Activated naive CD4-positive, alpha-beta T cell treated with anti-CD3 and anti-CD28 coated beads for 36 hours (primary cell): ENCODE measurements at regions of chr6 and their contacts with region 1.

Region 1: GRCh38 chr6:149190224-149190831 is 127.2 kb upstream of the TAB2 start:
- DNase-seq: peak; percentile 87
- H3K4me3 Mint-ChIP-seq: no peak overlapping the region
- H3K27ac Mint-ChIP-seq: no peak overlapping the region
- H3K4me1 Mint-ChIP-seq: peaks cover 19% of the 10 kb centered on the region
- H3K27me3 Mint-ChIP-seq: no peaks in the 10 kb centered on the region

Region 2: GRCh38 chr6:149082286-149082707 is 108.0 kb before region 1 on chr6:
- CTCF ChIA-PET with region 1: interaction called, 4 read pairs
- intact Hi-C with region 1: loop called (anchors 1 kb)
- DNase-seq: peak; percentile 97
- H3K4me3 Mint-ChIP-seq: no peak overlapping the region
- H3K27ac Mint-ChIP-seq: peak overlapping the region; percentile 41
- H3K4me1 Mint-ChIP-seq: peaks cover 54% of the 10 kb centered on the region
- H3K27me3 Mint-ChIP-seq: no peaks in the 10 kb centered on the region

Region 3: GRCh38 chr6:149200276-149200938 is 10.1 kb after region 1 on chr6:
- CTCF ChIA-PET with region 1: interaction called, 12 read pairs
- intact Hi-C with region 1: no loop called
- DNase-seq: no peak
- H3K4me3 Mint-ChIP-seq: no peak overlapping the region
- H3K27ac Mint-ChIP-seq: no peak overlapping the region
- H3K4me1 Mint-ChIP-seq: peaks cover 6% of the 10 kb centered on the region
- H3K27me3 Mint-ChIP-seq: no peaks in the 10 kb centered on the region

Region 4: GRCh38 chr6:149246691-149247384 is 56.5 kb after region 1 on chr6:
- CTCF ChIA-PET with region 1: no interaction called
- intact Hi-C with region 1: no loop called
- DNase-seq: no peak
- H3K4me3 Mint-ChIP-seq: no peak overlapping the region
- H3K27ac Mint-ChIP-seq: no peak overlapping the region
- H3K4me1 Mint-ChIP-seq: peaks cover 34% of the 10 kb centered on the region
- H3K27me3 Mint-ChIP-seq: no peaks in the 10 kb centered on the region

Region 5: DNA sequence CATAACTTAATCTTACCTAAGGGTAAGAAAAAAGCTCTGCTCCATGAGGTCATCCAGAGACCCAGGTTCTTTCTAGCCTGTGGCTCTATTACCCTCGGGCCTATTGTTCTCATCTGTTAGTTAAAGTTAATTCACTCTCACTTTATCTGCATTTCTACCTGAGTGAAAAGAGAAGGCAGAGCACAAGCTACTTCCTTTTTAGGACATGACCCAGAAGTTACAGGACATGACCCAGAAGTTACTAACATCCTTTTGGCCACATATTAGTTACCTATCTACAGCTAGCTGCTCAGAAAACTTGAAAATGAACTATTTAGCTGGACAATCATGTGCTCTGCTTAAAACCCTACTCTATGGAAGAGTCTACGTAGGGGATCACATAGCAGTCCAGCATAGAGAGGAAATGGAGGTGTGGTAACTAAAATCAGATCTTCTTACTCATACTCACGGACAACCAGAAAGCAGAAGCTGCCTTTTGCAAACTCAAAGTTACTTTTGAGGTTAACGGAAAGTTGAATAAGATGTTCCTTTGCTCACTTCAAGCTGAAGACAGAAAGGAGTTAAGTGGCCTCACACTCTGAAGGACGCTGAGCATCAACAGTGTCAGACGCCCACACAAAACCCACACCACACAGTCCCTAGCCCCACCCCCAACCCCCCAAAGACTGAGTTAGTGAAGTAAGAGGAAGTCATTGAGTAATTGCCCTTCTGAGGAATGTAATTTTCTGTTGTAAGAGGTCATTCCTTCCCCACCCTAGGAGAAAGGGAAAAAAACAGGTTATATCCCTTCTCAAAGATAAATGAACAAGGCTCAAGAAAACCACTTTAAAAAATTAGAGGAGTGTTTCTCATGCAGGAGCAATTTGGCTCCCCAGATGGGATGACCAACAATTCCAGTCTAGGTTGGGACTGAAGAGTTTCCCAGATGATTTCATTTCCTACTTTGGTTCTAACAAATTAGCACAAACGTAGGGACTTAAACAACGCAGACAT is 81.3 kb after region 1 on chr6:
- CTCF ChIA-PET with region 1: no interaction called
- intact Hi-C with region 1: no loop called
- DNase-seq: peak; percentile 68
- H3K4me3 Mint-ChIP-seq: peak overlapping the region; percentile 48
- H3K27ac Mint-ChIP-seq: peak overlapping the region; percentile 89
- H3K4me1 Mint-ChIP-seq: peaks cover 35% of the 10 kb centered on the region
- H3K27me3 Mint-ChIP-seq: no peaks in the 10 kb centered on the region